ENCODE measurements at regions of chr4 and their contacts with region 1.

Region 1: GRCh38 chr4:113394730-113395530 is 345.5 kb downstream of the ANK2 start:
- DNase-seq: peak in 1 of 2 donors; percentile 32
- ATAC-seq: peak; percentile 95
- H3K4me3 ChIP-seq: no peak overlapping the region
- H3K27ac ChIP-seq: no peak overlapping the region
- H3K4me1 ChIP-seq: peaks cover 2 to 3% of the 10 kb centered on the region in 2 donors
- H3K27me3 ChIP-seq: no peaks in the 10 kb centered on the region

Region 2: GRCh38 chr4:113468165-113469022 is 73.5 kb after region 1 on chr4:
- intact Hi-C with region 1: loop called in 1 of 2 experiments (anchors 5 kb)
- DNase-seq: peak; percentile 91 to 92
- ATAC-seq: peak; percentile 94
- H3K4me3 ChIP-seq: peak overlapping the region in 1 of 2 donors; percentile 26
- H3K27ac ChIP-seq: peak overlapping the region; percentile 94 to 97
- H3K4me1 ChIP-seq: peaks cover 3 to 7% of the 10 kb centered on the region in 2 donors
- H3K27me3 ChIP-seq: no peaks in the 10 kb centered on the region

Region 3: GRCh38 chr4:113499696-113500095 is 104.8 kb after region 1 on chr4:
- intact Hi-C with region 1: no loop called
- DNase-seq: no peak
- ATAC-seq: no peak
- H3K4me3 ChIP-seq: no peak overlapping the region
- H3K27ac ChIP-seq: no peak overlapping the region
- H3K4me1 ChIP-seq: no peaks in the 10 kb centered on the region
- H3K27me3 ChIP-seq: no peaks in the 10 kb centered on the region

Region 4: GRCh38 chr4:113547487-113548042 is 152.6 kb after region 1 on chr4:
- intact Hi-C with region 1: loop called in 1 of 2 experiments (anchors 10 kb)
- DNase-seq: peak; percentile 88 to 92
- ATAC-seq: peak; percentile 96
- H3K4me3 ChIP-seq: no peak overlapping the region
- H3K27ac ChIP-seq: no peak overlapping the region
- H3K4me1 ChIP-seq: peaks cover 0 to 2% of the 10 kb centered on the region in 2 donors
- H3K27me3 ChIP-seq: no peaks in the 10 kb centered on the region

Region 5: GRCh38 chr4:113881256-113881655 is 486.3 kb after region 1 on chr4:
- intact Hi-C with region 1: loop called in 1 of 2 experiments (anchors 5 kb)
- DNase-seq: no peak
- ATAC-seq: no peak
- H3K4me3 ChIP-seq: no peak overlapping the region
- H3K27ac ChIP-seq: peak overlapping the region; percentile 33 to 87
- H3K4me1 ChIP-seq: peaks cover 0 to 2% of the 10 kb centered on the region in 2 donors
- H3K27me3 ChIP-seq: no peaks in the 10 kb centered on the region

Region 6: GRCh38 chr4:113979148-113979904 is 584.4 kb after region 1 on chr4 and contains the start of gene ARSJ:
- intact Hi-C with region 1: loop called in 1 of 2 experiments (anchors 10 kb)
- DNase-seq: peak; percentile 68 to 92
- ATAC-seq: peak; percentile 86
- H3K4me3 ChIP-seq: peak within 1 kb of the TSS; percentile 71 to 93
- H3K27ac ChIP-seq: peak within 1 kb of the TSS; percentile 71 to 87
- H3K4me1 ChIP-seq: peaks cover 0 to 7% of the 10 kb centered on the region in 2 donors
- H3K27me3 ChIP-seq: no peaks in the 10 kb centered on the region
- total RNA-seq, gene ARSJ: 13.5 to 42.4 TPM

Region 7: GRCh38 chr4:114180481-114180880 is 785.6 kb after region 1 on chr4:
- intact Hi-C with region 1: loop called in 1 of 2 experiments (anchors 10 kb)
- DNase-seq: peak; percentile 72 to 75
- ATAC-seq: no peak
- H3K4me3 ChIP-seq: no peak overlapping the region
- H3K27ac ChIP-seq: no peak overlapping the region
- H3K4me1 ChIP-seq: no peaks in the 10 kb centered on the region
- H3K27me3 ChIP-seq: no peaks in the 10 kb centered on the region

Region 8: DNA sequence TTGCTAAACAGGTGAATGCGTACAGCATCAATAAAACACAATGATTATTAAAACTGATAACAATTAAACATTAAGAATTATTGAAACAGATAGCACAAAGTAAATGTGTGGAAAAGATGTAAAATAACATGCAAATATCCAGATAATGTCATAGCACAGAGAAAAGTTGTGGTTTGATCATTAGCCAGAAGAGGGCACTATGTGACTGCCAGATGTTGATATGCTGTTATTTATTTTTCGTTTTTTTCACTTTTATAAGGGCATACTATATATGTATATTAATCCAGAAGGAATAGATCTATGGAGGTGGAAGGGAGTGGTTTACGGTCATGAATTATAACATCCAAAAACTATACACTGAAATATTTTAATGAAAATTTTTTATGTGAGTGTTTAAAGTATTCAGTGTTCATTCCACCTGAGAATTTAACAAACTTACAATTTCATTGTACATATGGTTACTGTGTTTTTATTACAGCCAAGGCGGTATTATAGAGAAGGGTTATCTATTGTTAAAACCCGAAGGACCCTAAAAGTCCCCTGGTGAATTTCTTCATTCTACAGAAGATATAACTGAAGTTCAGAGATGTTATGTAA is 991.8 kb after region 1 on chr4:
- intact Hi-C with region 1: loop called in 1 of 2 experiments (anchors 10 kb)
- DNase-seq: no peak
- ATAC-seq: no peak
- H3K4me3 ChIP-seq: no peak overlapping the region
- H3K27ac ChIP-seq: no peak overlapping the region
- H3K4me1 ChIP-seq: no peaks in the 10 kb centered on the region
- H3K27me3 ChIP-seq: no peaks in the 10 kb centered on the region

Measured in aorta (tissue), 5 donors.